ENCODE measurements at regions of chr12 and their contacts with region 1.

Region 1: GRCh38 chr12:111529424-111530368 is 69.4 kb downstream of the ATXN2 start:
- DNase-seq: peak; percentile 8 to 82 (median 56)
- ATAC-seq: peak; percentile 80
- H3K4me3 ChIP-seq: no peak overlapping the region
- H3K4me3 Mint-ChIP-seq: no peak overlapping the region
- H3K27ac ChIP-seq: no peak overlapping the region
- H3K27ac Mint-ChIP-seq: no peak overlapping the region
- H3K4me1 ChIP-seq: no peaks in the 10 kb centered on the region
- H3K4me1 Mint-ChIP-seq: peaks cover 3% of the 10 kb centered on the region
- H3K27me3 ChIP-seq: no peaks in the 10 kb centered on the region
- H3K27me3 Mint-ChIP-seq: no peaks in the 10 kb centered on the region
- CTCF ChIP-seq: peak; percentile 87

Region 2: DNA sequence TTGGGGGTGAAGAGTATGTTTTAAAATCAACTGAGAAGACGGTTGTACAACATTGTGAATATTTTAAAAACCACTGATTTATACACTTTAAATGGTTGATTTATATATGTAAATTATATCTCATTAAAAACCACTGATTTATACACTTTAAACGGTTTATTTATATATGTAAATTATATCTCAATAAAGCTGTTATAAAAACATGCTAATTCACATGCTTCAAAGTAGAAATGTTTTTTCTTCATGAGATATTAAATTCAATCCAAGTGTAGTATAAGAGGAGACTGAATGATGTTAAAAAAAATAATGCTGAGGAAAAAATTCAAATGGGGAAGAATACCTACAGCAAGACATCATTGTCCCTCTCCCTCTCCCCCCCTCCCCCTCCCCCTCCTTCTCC is 23.4 kb before region 1 on chr12:
- CTCF ChIA-PET with region 1: interaction called, 10 read pairs
- POLR2A ChIA-PET with region 1: no interaction called
- intact Hi-C with region 1: no loop called
- DNase-seq: no peak
- ATAC-seq: no peak
- H3K4me3 ChIP-seq: no peak overlapping the region
- H3K4me3 Mint-ChIP-seq: no peak overlapping the region
- H3K27ac ChIP-seq: no peak overlapping the region
- H3K27ac Mint-ChIP-seq: no peak overlapping the region
- H3K4me1 ChIP-seq: no peaks in the 10 kb centered on the region
- H3K4me1 Mint-ChIP-seq: peaks cover 10% of the 10 kb centered on the region
- H3K27me3 ChIP-seq: no peaks in the 10 kb centered on the region
- H3K27me3 Mint-ChIP-seq: no peaks in the 10 kb centered on the region
- CTCF ChIP-seq: no peak

Region 3: GRCh38 chr12:111557271-111558106 is 27.8 kb after region 1 on chr12:
- CTCF ChIA-PET with region 1: no interaction called
- POLR2A ChIA-PET with region 1: no interaction called
- intact Hi-C with region 1: no loop called
- DNase-seq: no peak
- ATAC-seq: no peak
- H3K4me3 ChIP-seq: no peak overlapping the region
- H3K4me3 Mint-ChIP-seq: no peak overlapping the region
- H3K27ac ChIP-seq: no peak overlapping the region
- H3K27ac Mint-ChIP-seq: no peak overlapping the region
- H3K4me1 ChIP-seq: no peaks in the 10 kb centered on the region
- H3K4me1 Mint-ChIP-seq: peaks cover 27% of the 10 kb centered on the region
- H3K27me3 ChIP-seq: no peaks in the 10 kb centered on the region
- H3K27me3 Mint-ChIP-seq: no peaks in the 10 kb centered on the region
- CTCF ChIP-seq: no peak

Region 4: DNA sequence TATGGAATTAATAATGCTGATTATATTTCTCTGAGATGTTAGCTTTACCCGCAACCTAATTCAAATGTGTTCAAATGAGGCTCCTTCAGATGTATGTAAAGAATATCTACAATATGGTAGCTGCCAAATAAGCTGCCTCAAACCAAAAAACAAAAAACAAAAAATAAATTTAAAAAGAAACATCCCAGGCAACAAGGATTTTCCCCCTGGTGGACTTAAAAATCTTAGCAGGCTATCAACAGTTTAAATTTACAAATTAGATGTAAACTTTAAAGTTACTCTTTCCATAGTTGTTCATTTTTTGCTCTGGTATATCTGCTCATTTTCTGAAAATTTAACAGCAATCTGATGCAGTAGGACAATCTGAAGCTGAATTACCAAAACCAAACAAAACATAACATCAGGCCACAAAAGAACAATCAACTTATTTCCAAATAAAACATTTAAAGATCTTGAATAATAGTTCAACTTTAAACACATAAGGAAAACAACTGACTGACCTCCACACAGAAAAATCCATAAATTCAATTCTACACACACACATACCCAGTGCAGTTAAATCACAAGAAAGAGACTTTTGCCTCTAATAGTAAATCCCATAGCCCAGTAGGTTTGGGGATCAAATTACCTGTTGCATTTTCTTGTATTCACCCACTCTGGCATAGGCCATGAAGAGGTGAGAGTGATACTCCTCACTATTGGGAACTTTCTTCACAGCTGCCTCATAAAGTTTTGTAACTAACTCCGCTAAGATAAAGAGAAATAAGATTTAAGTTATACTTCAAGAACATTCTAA is 557.6 kb after region 1 on chr12:
- CTCF ChIA-PET with region 1: no interaction called
- POLR2A ChIA-PET with region 1: no interaction called
- intact Hi-C with region 1: no loop called
- DNase-seq: no peak
- ATAC-seq: no peak
- H3K4me3 ChIP-seq: no peak overlapping the region
- H3K4me3 Mint-ChIP-seq: no peak overlapping the region
- H3K27ac ChIP-seq: no peak overlapping the region
- H3K27ac Mint-ChIP-seq: peak overlapping the region; percentile 3
- H3K4me1 ChIP-seq: no peaks in the 10 kb centered on the region
- H3K4me1 Mint-ChIP-seq: peaks cover 15% of the 10 kb centered on the region
- H3K27me3 ChIP-seq: no peaks in the 10 kb centered on the region
- H3K27me3 Mint-ChIP-seq: no peaks in the 10 kb centered on the region
- CTCF ChIP-seq: no peak

Measured in CD8-positive, alpha-beta T cell (primary cell).